Mammary epithelial cell (primary cell): ENCODE measurements at regions of chr4 and their contacts with region 1.

Region 1: DNA sequence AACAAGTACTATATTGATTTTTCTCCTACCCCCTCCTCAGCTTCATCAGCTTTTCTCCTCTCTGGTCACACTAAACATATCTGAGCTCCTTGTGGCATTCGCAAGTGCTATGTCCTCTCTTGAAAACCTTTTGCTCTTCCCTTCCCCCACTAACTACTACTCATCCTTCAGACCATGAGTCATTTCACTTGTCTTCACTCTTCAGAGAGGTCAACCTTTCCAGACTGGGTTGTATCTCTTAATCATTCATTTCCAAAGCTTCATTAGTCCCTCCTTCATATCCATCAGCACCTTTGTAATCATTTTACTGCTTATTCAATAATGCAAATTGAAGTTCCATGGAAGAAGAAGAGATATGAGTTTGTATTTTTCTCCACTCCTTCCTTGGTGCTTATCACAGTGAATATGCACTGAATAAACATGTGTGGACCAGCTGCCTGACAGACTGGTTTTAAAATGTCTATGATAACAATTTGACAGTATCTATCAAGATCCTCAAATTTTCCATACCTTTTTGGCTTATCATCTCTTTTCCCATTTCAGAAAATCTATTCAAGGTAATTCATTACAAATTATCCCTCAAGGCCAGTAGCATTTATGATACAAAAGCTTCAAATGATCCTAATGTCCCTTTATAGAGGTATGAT is 28.4 kb downstream of the DDX60L start:
- DNase-seq: peak; percentile 84
- H3K4me3 ChIP-seq: no peak overlapping the region
- H3K27ac ChIP-seq: no peak overlapping the region
- H3K4me1 ChIP-seq: peaks cover 13% of the 10 kb centered on the region
- H3K27me3 ChIP-seq: no peaks in the 10 kb centered on the region
- CTCF ChIP-seq: no peak

Region 2: GRCh38 chr4:168361365-168362024 is 90.4 kb before region 1 on chr4:
- CTCF ChIA-PET with region 1: no interaction called
- dilution Hi-C with region 1: no loop called
- in situ Hi-C with region 1: no loop called
- intact Hi-C with region 1: no loop called
- DNase-seq: no peak
- H3K4me3 ChIP-seq: no peak overlapping the region
- H3K27ac ChIP-seq: no peak overlapping the region
- H3K4me1 ChIP-seq: no peaks in the 10 kb centered on the region
- H3K27me3 ChIP-seq: no peaks in the 10 kb centered on the region
- CTCF ChIP-seq: no peak

Region 3: DNA sequence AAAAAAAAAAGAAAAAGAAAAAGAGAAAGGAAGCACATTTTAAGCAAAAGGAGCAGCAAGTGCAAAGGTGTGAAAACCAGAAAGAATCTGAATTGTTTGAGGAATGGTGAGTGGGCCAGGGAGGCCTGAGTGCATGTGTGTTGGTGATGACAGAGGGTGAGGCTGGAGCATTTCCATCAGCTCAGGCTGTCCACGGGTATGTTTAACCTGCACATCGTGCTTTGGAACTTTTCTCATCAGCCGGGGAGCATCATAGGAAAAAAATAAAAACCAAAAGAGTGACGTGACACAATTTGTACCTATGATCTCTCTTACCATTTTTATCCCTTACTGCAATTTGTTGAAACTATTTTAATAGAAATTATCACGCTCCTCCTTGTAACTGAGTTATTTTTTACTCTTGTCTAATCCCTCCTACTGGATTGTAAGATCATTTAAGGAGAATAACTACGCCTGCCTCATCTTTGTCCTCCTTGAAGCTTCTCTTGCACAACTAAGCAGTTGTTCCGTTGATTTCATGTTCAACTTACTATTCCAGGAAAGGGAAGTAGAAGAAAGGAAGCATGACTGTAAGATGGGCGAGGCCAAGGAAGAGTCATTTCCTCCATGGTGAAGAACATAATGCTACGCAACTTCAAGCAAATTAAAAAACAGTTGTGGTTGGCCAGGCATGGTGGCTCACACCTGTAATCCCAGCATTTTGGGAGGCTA is 51.9 kb after region 1 on chr4:
- CTCF ChIA-PET with region 1: no interaction called
- dilution Hi-C with region 1: loop called (anchors 5 kb)
- in situ Hi-C with region 1: no loop called
- intact Hi-C with region 1: no loop called
- DNase-seq: no peak
- H3K4me3 ChIP-seq: no peak overlapping the region
- H3K27ac ChIP-seq: no peak overlapping the region
- H3K4me1 ChIP-seq: no peaks in the 10 kb centered on the region
- H3K27me3 ChIP-seq: no peaks in the 10 kb centered on the region
- CTCF ChIP-seq: no peak